Activated CD4-positive, alpha-beta memory T cell treated with anti-CD3 and anti-CD28 coated beads for 36 hours (primary cell): ENCODE measurements at regions of chr13 and their contacts with region 1.

Region 1: DNA sequence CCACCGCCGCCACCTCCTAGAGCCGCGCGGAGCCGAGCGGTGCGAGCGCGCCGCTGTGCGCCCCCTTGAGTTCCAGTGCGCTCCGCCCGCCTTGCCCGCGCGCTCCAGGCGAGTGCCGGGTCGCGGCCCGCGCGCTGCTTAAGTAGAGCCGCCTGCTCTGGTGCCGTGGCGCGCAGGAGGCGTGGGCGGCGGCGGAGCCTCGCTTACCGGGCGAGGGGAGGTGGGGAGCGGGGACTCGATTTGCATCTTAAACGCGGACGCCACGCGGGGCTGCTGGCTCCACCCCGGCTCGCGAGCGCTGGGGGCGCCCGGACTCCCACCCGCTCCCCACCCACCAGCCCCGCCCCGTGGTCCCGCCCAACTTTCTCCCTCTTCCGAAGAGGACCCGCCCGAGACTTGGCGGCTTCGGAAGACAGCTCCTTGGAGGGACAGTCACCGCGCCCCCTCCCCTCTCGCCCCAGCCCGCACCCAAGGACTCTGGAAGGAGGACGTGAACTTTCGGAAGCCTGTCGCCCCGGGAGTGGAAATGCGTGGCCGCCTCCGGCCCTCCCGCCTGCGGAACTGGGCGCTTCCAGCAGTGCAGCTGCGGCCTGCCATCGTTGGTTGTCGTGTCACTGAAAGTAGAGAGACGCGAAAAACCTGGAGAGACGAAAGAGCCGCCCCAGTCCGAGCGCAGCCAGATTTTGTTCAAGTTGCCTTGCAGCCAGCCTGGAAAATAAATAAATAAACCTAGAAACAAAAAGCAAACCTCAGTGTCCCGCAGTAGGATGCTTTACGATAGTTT is at the start of gene KCTD12:
- DNase-seq: peak; percentile 77
- H3K4me3 Mint-ChIP-seq: peak within 1 kb of the TSS; percentile 84
- H3K27ac Mint-ChIP-seq: peak within 1 kb of the TSS; percentile 50
- H3K4me1 Mint-ChIP-seq: peaks cover 30% of the 10 kb centered on the region
- H3K27me3 Mint-ChIP-seq: peaks cover 12% of the 10 kb centered on the region
- total RNA-seq, gene KCTD12: 6.1 to 6.7 TPM

Region 2: DNA sequence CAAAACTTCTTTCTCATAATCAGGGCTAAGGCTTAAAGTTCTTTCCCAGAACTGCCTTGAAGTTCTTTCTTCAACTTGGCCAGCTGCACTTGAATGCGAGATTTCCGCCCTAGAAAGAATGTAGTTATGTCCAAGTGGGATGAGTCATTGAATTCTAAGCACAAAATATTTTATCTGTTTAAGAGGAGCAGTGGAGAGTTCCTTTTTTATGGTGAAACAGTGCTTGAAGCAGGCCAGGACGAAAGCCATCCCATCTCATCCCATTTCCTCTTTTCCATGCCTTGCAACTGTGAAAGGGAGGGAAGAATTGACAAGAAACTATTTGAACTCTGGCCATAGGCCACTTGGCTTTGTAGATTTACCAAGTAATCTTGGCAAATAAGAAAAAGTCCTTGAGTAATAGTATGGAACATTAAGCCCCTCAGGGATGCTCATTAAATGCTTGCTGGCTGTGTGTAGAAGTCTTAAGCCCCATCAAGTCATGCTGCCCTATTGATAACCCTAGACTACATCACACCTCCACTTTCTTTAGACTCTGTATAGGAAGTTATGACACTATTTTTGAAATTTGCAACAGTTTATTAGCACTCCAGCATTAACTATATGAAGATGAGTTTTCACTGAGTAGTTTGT is 174.8 kb before region 1 on chr13:
- CTCF ChIA-PET with region 1: no interaction called
- POLR2A ChIA-PET with region 1: no interaction called
- intact Hi-C with region 1: no loop called
- DNase-seq: no peak
- H3K4me3 Mint-ChIP-seq: no peak overlapping the region
- H3K27ac Mint-ChIP-seq: no peak overlapping the region
- H3K4me1 Mint-ChIP-seq: no peaks in the 10 kb centered on the region
- H3K27me3 Mint-ChIP-seq: no peaks in the 10 kb centered on the region

Region 3: GRCh38 chr13:76745261-76746200 is 141.0 kb before region 1 on chr13:
- CTCF ChIA-PET with region 1: no interaction called
- POLR2A ChIA-PET with region 1: no interaction called
- intact Hi-C with region 1: no loop called
- DNase-seq: no peak
- H3K4me3 Mint-ChIP-seq: no peak overlapping the region
- H3K27ac Mint-ChIP-seq: no peak overlapping the region
- H3K4me1 Mint-ChIP-seq: no peaks in the 10 kb centered on the region
- H3K27me3 Mint-ChIP-seq: peaks cover 6% of the 10 kb centered on the region

Region 4: DNA sequence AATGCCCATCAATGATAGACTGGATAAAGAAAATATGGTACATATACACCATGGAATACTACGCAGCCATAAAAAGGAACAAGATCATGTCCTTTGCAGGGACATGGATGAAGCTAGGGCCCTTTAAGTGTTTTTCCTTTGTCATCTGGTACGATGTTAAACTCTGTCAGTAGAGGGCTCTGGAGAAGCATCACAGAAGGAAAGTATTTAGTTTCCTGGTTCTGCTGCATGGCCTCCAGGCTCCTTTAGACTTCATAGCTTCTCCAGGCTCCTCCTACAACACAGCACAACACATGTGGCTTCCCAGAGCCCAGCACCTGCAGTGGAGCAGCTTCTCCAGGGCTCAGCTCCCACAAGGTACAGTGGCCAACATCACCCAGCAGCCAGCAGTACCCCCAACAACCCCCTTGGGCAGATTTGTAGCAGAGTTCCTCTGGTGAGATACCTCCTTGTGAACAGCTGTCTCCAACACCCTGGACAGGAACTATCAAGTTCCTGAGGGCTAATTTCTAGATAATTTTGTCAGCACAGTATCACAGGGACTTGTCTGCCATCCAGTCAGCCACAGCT is 63.7 kb before region 1 on chr13:
- CTCF ChIA-PET with region 1: interaction called, 23 read pairs
- POLR2A ChIA-PET with region 1: no interaction called
- intact Hi-C with region 1: no loop called
- DNase-seq: no peak
- H3K4me3 Mint-ChIP-seq: no peak overlapping the region
- H3K27ac Mint-ChIP-seq: no peak overlapping the region
- H3K4me1 Mint-ChIP-seq: no peaks in the 10 kb centered on the region
- H3K27me3 Mint-ChIP-seq: peaks cover 7% of the 10 kb centered on the region

Region 5: GRCh38 chr13:76865996-76866503 is 20.4 kb before region 1 on chr13:
- CTCF ChIA-PET with region 1: no interaction called
- POLR2A ChIA-PET with region 1: no interaction called
- intact Hi-C with region 1: no loop called
- DNase-seq: no peak
- H3K4me3 Mint-ChIP-seq: no peak overlapping the region
- H3K27ac Mint-ChIP-seq: no peak overlapping the region
- H3K4me1 Mint-ChIP-seq: no peaks in the 10 kb centered on the region
- H3K27me3 Mint-ChIP-seq: peaks cover 18% of the 10 kb centered on the region